Esophagus squamous epithelium (tissue), 5 donors: ENCODE measurements at regions of chr4 and their contacts with region 1.

Region 1: DNA sequence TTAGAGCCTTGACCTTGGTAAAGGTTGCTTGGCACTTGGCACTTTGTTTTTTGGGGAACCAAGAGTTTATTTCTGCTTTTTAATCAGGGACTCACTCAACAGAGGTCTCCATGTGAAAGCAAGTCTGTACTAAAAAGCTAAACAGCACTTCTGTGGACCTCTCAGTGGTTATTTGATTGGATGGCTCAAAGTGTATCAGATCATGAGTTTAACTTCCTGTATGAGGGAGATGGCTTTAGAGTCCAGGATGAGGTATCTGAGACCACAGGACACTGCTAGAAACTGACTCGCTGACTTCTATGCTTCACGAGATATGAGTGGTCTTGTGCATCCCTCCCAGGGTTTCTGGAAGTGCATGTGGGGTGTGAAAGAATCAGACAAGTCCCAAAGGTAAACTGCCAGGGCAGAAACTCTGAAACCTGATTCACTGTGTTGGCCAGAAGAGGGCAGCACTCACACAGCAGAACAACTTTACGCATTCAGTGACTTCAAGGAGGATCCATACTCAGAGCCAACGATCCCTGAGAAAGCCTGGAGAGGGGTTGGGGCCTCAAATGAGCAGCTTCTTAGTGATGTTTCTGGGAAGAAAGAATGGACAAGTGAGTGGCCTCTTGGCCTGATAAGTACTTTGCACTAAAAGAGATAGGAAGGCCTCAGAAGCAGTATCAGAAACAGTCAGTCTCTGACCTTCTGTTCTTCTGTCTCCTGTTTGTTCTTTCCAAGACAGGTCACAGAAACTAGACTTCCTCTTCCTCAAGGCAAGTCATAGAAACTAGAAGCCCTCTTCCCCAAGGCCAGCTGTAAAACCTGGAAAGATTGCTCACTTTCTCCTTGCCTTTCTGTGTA is 220.3 kb upstream of the CXCL13 start:
- DNase-seq: no peak
- H3K4me3 ChIP-seq: no peak overlapping the region
- H3K27ac ChIP-seq: no peak overlapping the region
- H3K4me1 ChIP-seq: no peaks in the 10 kb centered on the region
- H3K27me3 ChIP-seq: no peaks in the 10 kb centered on the region
- CTCF ChIP-seq: peak; percentile 55 to 81 (median 76)
- POLR2A ChIP-seq: no peak

Region 2: DNA sequence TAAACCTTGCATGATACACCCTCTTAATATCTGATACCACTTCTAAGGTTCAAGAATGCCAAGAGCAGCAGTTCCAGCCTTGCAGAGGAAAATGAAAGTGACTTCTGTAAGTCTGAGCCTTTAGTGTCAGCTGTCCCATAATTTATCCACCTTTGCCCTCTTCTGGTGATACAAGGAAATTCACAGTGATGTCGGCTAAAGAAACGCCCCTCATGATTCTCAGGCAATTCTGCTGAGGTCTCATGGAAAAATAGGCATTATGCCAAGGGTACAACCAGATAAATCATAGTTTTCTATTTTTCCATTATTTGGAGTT is 48.0 kb after region 1 on chr4:
- intact Hi-C with region 1: loop called (anchors 5 kb)
- DNase-seq: no peak
- H3K4me3 ChIP-seq: no peak overlapping the region
- H3K27ac ChIP-seq: peak overlapping the region in 1 of 4 donors; percentile 4
- H3K4me1 ChIP-seq: peaks cover 0 to 13% (median 2%) of the 10 kb centered on the region in 3 donors
- H3K27me3 ChIP-seq: no peaks in the 10 kb centered on the region
- CTCF ChIP-seq: peak; percentile 23 to 73 (median 48)
- POLR2A ChIP-seq: no peak

Region 3: DNA sequence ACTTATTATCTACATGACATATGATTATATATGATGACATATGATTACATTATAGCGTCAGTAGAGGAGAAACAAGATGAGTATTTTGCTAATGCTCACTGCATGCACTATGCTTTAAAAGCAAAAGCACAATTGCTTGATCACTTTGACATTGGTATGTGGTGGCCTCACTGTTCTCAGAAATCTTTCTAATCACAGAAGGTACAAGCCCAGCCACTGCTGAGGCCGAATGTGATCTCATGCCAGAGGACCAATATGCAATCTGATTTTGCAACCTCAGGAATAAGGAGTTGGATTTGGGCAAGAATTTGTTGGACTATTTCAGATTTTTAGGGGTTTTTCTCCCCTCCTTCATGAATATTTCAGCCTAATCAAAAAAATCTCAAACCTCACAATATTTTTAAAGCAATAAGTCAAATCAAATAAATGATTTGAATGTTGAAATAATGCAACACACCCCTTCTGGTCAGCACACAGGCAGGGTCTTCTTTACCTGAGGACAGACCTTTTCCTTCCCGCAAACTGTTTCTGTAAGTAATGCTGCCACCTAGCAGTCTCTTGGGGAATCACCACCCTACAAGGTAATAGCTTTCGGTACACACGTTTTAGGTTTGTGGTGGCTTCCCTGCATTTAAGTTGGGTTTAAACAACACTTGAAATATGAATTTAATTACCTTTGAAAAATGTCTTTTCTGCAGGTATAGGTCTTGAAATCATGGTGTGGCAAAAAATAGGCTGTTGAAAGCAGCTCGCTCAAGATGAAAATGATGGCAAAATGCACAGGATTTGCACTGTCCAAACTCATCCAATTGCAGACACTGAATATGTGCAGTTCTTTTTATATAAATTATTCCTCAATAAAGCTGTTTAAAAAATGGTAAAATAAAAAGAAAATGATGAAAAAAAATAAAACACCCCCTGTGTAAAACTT is 215.4 kb after region 1 on chr4:
- intact Hi-C with region 1: loop called (anchors 10 kb)
- DNase-seq: no peak
- H3K4me3 ChIP-seq: no peak overlapping the region
- H3K27ac ChIP-seq: no peak overlapping the region
- H3K4me1 ChIP-seq: peaks cover 0 to 9% (median 0%) of the 10 kb centered on the region in 3 donors
- H3K27me3 ChIP-seq: peaks cover 0 to 21% (median 0%) of the 10 kb centered on the region in 4 donors
- CTCF ChIP-seq: peak; percentile 23 to 76 (median 72)
- POLR2A ChIP-seq: no peak